ENCODE measurements at regions of chr6 and their contacts with region 1.

Region 1: GRCh38 chr6:27146706-27147505 is 100.6 kb upstream of the PRSS16 start:
- DNase-seq: peak; percentile 61 to 99 (median 72)
- ATAC-seq: peak; percentile 86
- H3K4me3 ChIP-seq: peak overlapping the region; percentile 69
- H3K4me3 Mint-ChIP-seq: no peak overlapping the region
- H3K27ac ChIP-seq: peak overlapping the region; percentile 84 to 97
- H3K27ac Mint-ChIP-seq: no peak overlapping the region
- H3K4me1 ChIP-seq: peaks cover 17% of the 10 kb centered on the region
- H3K4me1 Mint-ChIP-seq: peaks cover 11% of the 10 kb centered on the region
- H3K27me3 ChIP-seq: no peaks in the 10 kb centered on the region
- H3K27me3 Mint-ChIP-seq: no peaks in the 10 kb centered on the region
- CTCF ChIP-seq: no peak

Region 2: DNA sequence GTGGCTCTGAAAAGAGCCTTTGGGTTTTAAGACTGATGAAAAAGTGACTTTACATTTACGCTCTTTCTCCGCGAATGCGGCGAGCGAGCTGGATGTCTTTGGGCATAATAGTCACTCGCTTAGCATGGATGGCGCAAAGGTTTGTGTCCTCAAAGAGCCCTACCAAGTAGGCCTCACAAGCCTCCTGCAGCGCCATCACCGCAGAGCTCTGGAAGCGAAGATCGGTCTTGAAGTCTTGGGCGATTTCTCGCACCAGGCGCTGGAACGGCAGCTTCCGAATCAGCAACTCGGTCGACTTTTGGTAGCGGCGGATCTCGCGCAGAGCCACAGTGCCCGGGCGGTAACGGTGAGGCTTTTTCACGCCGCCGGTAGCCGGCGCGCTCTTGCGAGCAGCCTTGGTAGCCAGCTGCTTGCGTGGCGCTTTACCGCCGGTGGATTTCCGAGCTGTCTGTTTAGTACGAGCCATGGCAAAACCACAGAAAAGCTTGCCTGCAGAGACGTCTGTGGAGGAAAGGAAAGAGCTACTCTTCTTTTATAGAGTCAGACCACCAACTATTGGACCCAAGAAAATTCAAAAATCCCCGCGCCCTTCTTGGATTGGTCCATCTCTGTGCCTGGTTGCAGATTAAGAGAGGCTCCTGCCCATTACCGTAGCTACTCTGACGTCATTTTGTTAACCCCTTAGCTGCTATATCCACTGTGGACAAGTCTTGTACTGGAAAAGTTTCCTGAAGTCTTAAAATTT is 1115.1 kb before region 1 on chr6:
- CTCF ChIA-PET with region 1: no interaction called
- POLR2A ChIA-PET with region 1: interaction called, 41 read pairs
- intact Hi-C with region 1: no loop called
- DNase-seq: peak; percentile 73 to 94 (median 81)
- ATAC-seq: peak; percentile 65
- H3K4me3 ChIP-seq: peak overlapping the region; percentile 64
- H3K4me3 Mint-ChIP-seq: peak overlapping the region; percentile 97
- H3K27ac ChIP-seq: peak overlapping the region; percentile 42 to 72
- H3K27ac Mint-ChIP-seq: peak overlapping the region; percentile 99
- H3K4me1 ChIP-seq: peaks cover 35% of the 10 kb centered on the region
- H3K4me1 Mint-ChIP-seq: peaks cover 46% of the 10 kb centered on the region
- H3K27me3 ChIP-seq: no peaks in the 10 kb centered on the region
- H3K27me3 Mint-ChIP-seq: no peaks in the 10 kb centered on the region
- CTCF ChIP-seq: peak; percentile 22

Region 3: GRCh38 chr6:26204332-26205165 is 942.4 kb before region 1 on chr6:
- CTCF ChIA-PET with region 1: no interaction called
- POLR2A ChIA-PET with region 1: interaction called, 85 read pairs
- intact Hi-C with region 1: no loop called
- DNase-seq: peak; percentile 73 to 98 (median 80)
- ATAC-seq: peak; percentile 69
- H3K4me3 ChIP-seq: peak overlapping the region; percentile 68
- H3K4me3 Mint-ChIP-seq: no peak overlapping the region
- H3K27ac ChIP-seq: peak overlapping the region; percentile 89 to 90
- H3K27ac Mint-ChIP-seq: no peak overlapping the region
- H3K4me1 ChIP-seq: peaks cover 34% of the 10 kb centered on the region
- H3K4me1 Mint-ChIP-seq: peaks cover 8% of the 10 kb centered on the region
- H3K27me3 ChIP-seq: no peaks in the 10 kb centered on the region
- H3K27me3 Mint-ChIP-seq: no peaks in the 10 kb centered on the region
- CTCF ChIP-seq: peak; percentile 32

Region 4: GRCh38 chr6:27157459-27158315 is 10.8 kb after region 1 on chr6:
- CTCF ChIA-PET with region 1: interaction called, 4 read pairs
- POLR2A ChIA-PET with region 1: interaction called, 72 read pairs
- intact Hi-C with region 1: loop called in 1 of 2 experiments (anchors 1 kb)
- DNase-seq: peak; percentile 73 to 93 (median 85)
- ATAC-seq: peak; percentile 88
- H3K4me3 ChIP-seq: peak overlapping the region; percentile 59
- H3K4me3 Mint-ChIP-seq: peak overlapping the region; percentile 90
- H3K27ac ChIP-seq: peak overlapping the region in 1 of 2 donors; percentile 32
- H3K27ac Mint-ChIP-seq: peak overlapping the region; percentile 96
- H3K4me1 ChIP-seq: peaks cover 22% of the 10 kb centered on the region
- H3K4me1 Mint-ChIP-seq: peaks cover 44% of the 10 kb centered on the region
- H3K27me3 ChIP-seq: no peaks in the 10 kb centered on the region
- H3K27me3 Mint-ChIP-seq: peaks cover 7% of the 10 kb centered on the region
- CTCF ChIP-seq: peak; percentile 78

Region 5: DNA sequence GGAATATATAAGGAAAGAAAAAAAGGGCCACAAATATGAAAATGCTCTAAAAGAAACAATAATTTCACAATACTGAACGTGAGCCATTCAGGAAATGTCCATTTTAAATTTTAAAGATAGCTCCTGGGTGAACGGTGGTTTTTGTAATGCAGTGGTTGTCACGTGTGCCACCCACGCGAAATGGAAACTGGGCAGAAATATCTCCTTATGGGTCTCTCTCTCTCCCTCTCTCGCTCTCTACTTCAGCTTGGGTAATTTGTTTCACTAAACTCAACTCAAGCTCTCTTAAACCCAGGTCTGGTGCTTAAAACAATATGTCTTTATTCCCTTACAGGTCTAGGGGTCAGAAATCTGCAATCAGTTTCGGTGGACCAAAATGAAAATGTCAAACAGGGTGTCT is 614.5 kb after region 1 on chr6:
- CTCF ChIA-PET with region 1: no interaction called
- POLR2A ChIA-PET with region 1: interaction called, 16 read pairs
- intact Hi-C with region 1: no loop called
- DNase-seq: peak in 2 of 14 experiments; percentile 11 to 17
- ATAC-seq: peak; percentile 41
- H3K4me3 ChIP-seq: no peak overlapping the region
- H3K4me3 Mint-ChIP-seq: peak overlapping the region; percentile 94
- H3K27ac ChIP-seq: no peak overlapping the region
- H3K27ac Mint-ChIP-seq: peak overlapping the region; percentile 98
- H3K4me1 ChIP-seq: peaks cover 14% of the 10 kb centered on the region
- H3K4me1 Mint-ChIP-seq: peaks cover 40% of the 10 kb centered on the region
- H3K27me3 ChIP-seq: no peaks in the 10 kb centered on the region
- H3K27me3 Mint-ChIP-seq: peaks cover 2% of the 10 kb centered on the region
- CTCF ChIP-seq: no peak

Region 6: GRCh38 chr6:27871924-27872638 is 725.2 kb after region 1 on chr6:
- CTCF ChIA-PET with region 1: no interaction called
- POLR2A ChIA-PET with region 1: interaction called, 62 read pairs
- intact Hi-C with region 1: no loop called
- DNase-seq: peak; percentile 71 to 97 (median 82)
- ATAC-seq: peak; percentile 75
- H3K4me3 ChIP-seq: peak overlapping the region; percentile 86
- H3K4me3 Mint-ChIP-seq: peak overlapping the region; percentile 93
- H3K27ac ChIP-seq: peak overlapping the region; percentile 89
- H3K27ac Mint-ChIP-seq: peak overlapping the region; percentile 93
- H3K4me1 ChIP-seq: peaks cover 39% of the 10 kb centered on the region
- H3K4me1 Mint-ChIP-seq: peaks cover 41% of the 10 kb centered on the region
- H3K27me3 ChIP-seq: no peaks in the 10 kb centered on the region
- H3K27me3 Mint-ChIP-seq: no peaks in the 10 kb centered on the region
- CTCF ChIP-seq: peak; percentile 43